ENCODE measurements at regions of chr7 and their contacts with region 1.

Region 1: GRCh38 chr7:97027427-97028234 is 3.0 kb upstream of the DLX5 start:
- DNase-seq: peak; percentile 76
- ATAC-seq: peak; percentile 71
- H3K4me3 ChIP-seq: peak overlapping the region in 3 of 5 experiments; percentile 30 to 52 (median 32)
- H3K4me3 Mint-ChIP-seq: peak overlapping the region; percentile 86
- H3K27ac ChIP-seq: no peak overlapping the region
- H3K27ac Mint-ChIP-seq: no peak overlapping the region
- H3K4me1 ChIP-seq: peaks cover 18 to 28% of the 10 kb centered on the region in 2 donors
- H3K4me1 Mint-ChIP-seq: peaks cover 24% of the 10 kb centered on the region
- H3K27me3 ChIP-seq: peaks cover 0 to 58% (median 39%) of the 10 kb centered on the region in 4 experiments
- H3K27me3 Mint-ChIP-seq: peaks cover 77% of the 10 kb centered on the region
- CTCF ChIP-seq: peak; percentile 80

Region 2: GRCh38 chr7:96075510-96076349 is 951.9 kb before region 1 on chr7:
- CTCF ChIA-PET with region 1: interaction called, 22 read pairs
- POLR2A ChIA-PET with region 1: no interaction called
- intact Hi-C with region 1: no loop called
- DNase-seq: peak; percentile 65
- ATAC-seq: peak; percentile 79
- H3K4me3 ChIP-seq: peak overlapping the region in 4 of 5 experiments; percentile 18 to 56 (median 47)
- H3K4me3 Mint-ChIP-seq: peak overlapping the region; percentile 92
- H3K27ac ChIP-seq: no peak overlapping the region
- H3K27ac Mint-ChIP-seq: no peak overlapping the region
- H3K4me1 ChIP-seq: peaks cover 9% of the 10 kb centered on the region in 2 donors
- H3K4me1 Mint-ChIP-seq: peaks cover 6% of the 10 kb centered on the region
- H3K27me3 ChIP-seq: peaks cover 0 to 32% (median 23%) of the 10 kb centered on the region in 4 experiments
- H3K27me3 Mint-ChIP-seq: peaks cover 40% of the 10 kb centered on the region
- CTCF ChIP-seq: peak; percentile 81

Region 3: DNA sequence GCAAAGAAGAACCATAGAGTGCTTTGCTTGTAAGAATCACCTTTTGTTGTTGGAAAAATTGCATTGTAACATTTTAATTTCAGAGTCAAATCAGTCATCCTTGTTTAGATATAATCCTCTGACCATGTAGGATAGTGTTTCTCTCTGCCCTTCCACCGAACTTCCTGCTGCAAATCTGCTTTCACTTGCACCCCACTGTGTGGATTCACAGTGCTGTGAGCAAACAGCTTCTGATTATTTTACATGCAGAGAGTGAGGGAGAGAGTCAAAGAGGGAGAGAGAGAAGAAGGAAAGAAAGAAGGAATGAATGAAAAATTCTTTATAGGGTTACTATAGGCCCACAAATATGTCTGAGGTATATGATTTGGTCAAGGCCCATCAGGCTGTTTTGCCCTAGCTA is 288.0 kb before region 1 on chr7:
- CTCF ChIA-PET with region 1: no interaction called
- POLR2A ChIA-PET with region 1: no interaction called
- intact Hi-C with region 1: no loop called
- DNase-seq: no peak
- ATAC-seq: no peak
- H3K4me3 ChIP-seq: no peak overlapping the region
- H3K4me3 Mint-ChIP-seq: no peak overlapping the region
- H3K27ac ChIP-seq: no peak overlapping the region
- H3K27ac Mint-ChIP-seq: no peak overlapping the region
- H3K4me1 ChIP-seq: no peaks in the 10 kb centered on the region
- H3K4me1 Mint-ChIP-seq: no peaks in the 10 kb centered on the region
- H3K27me3 ChIP-seq: peaks cover 0 to 4% (median 0%) of the 10 kb centered on the region in 4 experiments
- H3K27me3 Mint-ChIP-seq: peaks cover 27% of the 10 kb centered on the region
- CTCF ChIP-seq: no peak

Region 4: DNA sequence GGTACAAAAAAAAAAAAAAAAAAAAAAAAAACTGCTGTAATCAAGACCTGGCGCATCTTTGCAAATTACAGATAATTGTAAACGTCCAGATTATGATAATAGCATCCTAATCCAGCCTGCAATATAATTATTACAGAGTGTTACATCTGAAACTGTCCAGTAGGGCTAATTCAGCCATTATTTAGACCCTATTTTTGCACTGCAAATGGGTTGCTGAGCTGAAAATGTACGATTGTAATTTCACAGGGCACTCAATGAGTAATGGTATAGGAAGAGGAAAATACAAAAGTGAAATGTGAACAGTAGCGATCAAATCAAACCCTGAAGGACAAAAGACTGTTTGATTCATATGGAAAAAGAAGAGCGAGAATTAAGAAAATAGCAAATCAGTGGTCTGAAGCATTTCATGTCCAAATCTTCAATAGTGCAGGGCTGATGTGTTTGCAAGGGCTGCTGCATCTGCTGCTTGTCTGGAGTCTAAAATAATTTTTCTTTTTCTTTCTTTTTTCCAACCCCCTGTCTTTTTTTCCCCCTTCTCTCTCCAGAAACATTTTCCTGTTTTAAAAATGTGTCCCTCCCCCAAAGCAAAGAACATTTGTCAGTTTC is 13.4 kb before region 1 on chr7:
- CTCF ChIA-PET with region 1: interaction called, 5 read pairs
- POLR2A ChIA-PET with region 1: interaction called, 11 read pairs
- intact Hi-C with region 1: no loop called
- DNase-seq: no peak
- ATAC-seq: no peak
- H3K4me3 ChIP-seq: no peak overlapping the region
- H3K4me3 Mint-ChIP-seq: no peak overlapping the region
- H3K27ac ChIP-seq: no peak overlapping the region
- H3K27ac Mint-ChIP-seq: no peak overlapping the region
- H3K4me1 ChIP-seq: no peaks in the 10 kb centered on the region
- H3K4me1 Mint-ChIP-seq: peaks cover 2% of the 10 kb centered on the region
- H3K27me3 ChIP-seq: peaks cover 0 to 78% (median 68%) of the 10 kb centered on the region in 4 experiments
- H3K27me3 Mint-ChIP-seq: peaks cover 87% of the 10 kb centered on the region
- CTCF ChIP-seq: no peak

Measured in B cell (primary cell).